Vagina (tissue), 2 donors: ENCODE measurements at regions of chr5 and their contacts with region 1.

Region 1: DNA sequence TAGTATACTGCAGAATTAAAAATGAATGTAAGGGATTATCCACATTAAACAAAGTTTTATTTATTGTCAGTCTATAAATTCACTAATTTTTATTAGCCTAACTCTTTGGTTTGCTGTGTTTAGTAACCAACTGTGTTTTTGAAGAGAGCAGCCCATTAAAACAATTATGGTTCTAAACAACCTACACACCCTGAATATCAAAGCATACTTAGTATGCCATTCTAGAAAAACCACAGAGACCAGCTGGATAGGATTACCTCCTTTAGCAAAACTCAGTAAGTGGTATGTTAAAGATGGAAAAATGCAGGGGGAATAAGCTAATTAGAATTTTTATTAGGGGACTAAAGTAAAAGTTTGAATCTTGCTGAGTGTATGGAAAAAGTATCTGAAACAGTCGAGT is 1981.7 kb upstream of the NUDT12 start:
- DNase-seq: no peak
- H3K4me3 ChIP-seq: no peak overlapping the region
- H3K27ac ChIP-seq: no peak overlapping the region
- H3K4me1 ChIP-seq: no peaks in the 10 kb centered on the region
- H3K27me3 ChIP-seq: no peaks in the 10 kb centered on the region
- CTCF ChIP-seq: no peak
- POLR2A ChIP-seq: no peak

Region 2: GRCh38 chr5:105560941-105561340 is 16.6 kb after region 1 on chr5:
- intact Hi-C with region 1: loop called (anchors 1 kb)
- DNase-seq: no peak
- H3K4me3 ChIP-seq: no peak overlapping the region
- H3K27ac ChIP-seq: no peak overlapping the region
- H3K4me1 ChIP-seq: no peaks in the 10 kb centered on the region
- H3K27me3 ChIP-seq: no peaks in the 10 kb centered on the region
- CTCF ChIP-seq: no peak
- POLR2A ChIP-seq: no peak